ENCODE measurements at regions of chr3 and their contacts with region 1.

Region 1: GRCh38 chr3:145448436-145448835 is 712.5 kb downstream of the PLOD2 start:
- DNase-seq: peak; percentile 2
- ATAC-seq: no peak
- H3K4me3 ChIP-seq: no peak overlapping the region
- H3K27ac ChIP-seq: no peak overlapping the region
- H3K4me1 ChIP-seq: no peaks in the 10 kb centered on the region
- H3K27me3 ChIP-seq: no peaks in the 10 kb centered on the region
- CTCF ChIP-seq: no peak
- EP300 ChIP-seq: no peak
- POLR2A ChIP-seq: no peak
- RAD21 ChIP-seq: no peak

Region 2: DNA sequence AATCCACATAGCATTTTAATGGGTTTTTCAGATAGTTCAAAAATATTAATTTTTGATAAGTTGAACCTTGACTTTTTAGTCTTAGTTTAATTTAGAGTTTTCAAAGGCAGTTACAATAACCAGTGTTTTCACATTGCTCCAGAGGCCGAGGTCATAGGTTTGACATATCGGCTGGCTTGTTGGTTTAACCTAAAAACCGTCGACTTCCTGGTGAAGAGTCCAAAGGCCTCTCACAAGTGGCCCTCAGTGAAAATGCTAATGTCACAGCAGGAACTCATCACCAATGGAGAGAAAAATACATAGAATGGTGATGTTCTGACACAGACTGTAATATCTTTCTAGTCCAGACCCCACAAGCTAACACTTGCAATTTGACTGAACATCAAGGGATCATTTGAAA is 70.2 kb after region 1 on chr3:
- CTCF ChIA-PET with region 1: no interaction called
- POLR2A ChIA-PET with region 1: no interaction called
- in situ Hi-C with region 1: no loop called
- intact Hi-C with region 1: loop called (anchors 10 kb)
- DNase-seq: peak; percentile 67
- ATAC-seq: peak; percentile 97
- H3K4me3 ChIP-seq: no peak overlapping the region
- H3K27ac ChIP-seq: peak overlapping the region; percentile 5
- H3K4me1 ChIP-seq: peaks cover 34% of the 10 kb centered on the region
- H3K27me3 ChIP-seq: no peaks in the 10 kb centered on the region
- CTCF ChIP-seq: no peak
- EP300 ChIP-seq: peak in 1 of 2 experiments; percentile 61; a peak in 2 of 4 replicates
- POLR2A ChIP-seq: no peak
- RAD21 ChIP-seq: no peak

Region 3: GRCh38 chr3:145939431-145939830 is 491.0 kb after region 1 on chr3:
- CTCF ChIA-PET with region 1: no interaction called
- POLR2A ChIA-PET with region 1: no interaction called
- in situ Hi-C with region 1: no loop called
- intact Hi-C with region 1: no loop called
- DNase-seq: peak; percentile 8
- ATAC-seq: no peak
- H3K4me3 ChIP-seq: no peak overlapping the region
- H3K27ac ChIP-seq: no peak overlapping the region
- H3K4me1 ChIP-seq: peaks cover 6% of the 10 kb centered on the region; the same call in 1 of the 2 replicates
- H3K27me3 ChIP-seq: no peaks in the 10 kb centered on the region
- CTCF ChIP-seq: no peak
- EP300 ChIP-seq: no peak
- POLR2A ChIP-seq: no peak
- RAD21 ChIP-seq: no peak

Measured in HepG2 (cell line).